Psoas muscle (tissue), 8 donors: ENCODE measurements at regions of chr1 and their contacts with region 1.

Region 1: DNA sequence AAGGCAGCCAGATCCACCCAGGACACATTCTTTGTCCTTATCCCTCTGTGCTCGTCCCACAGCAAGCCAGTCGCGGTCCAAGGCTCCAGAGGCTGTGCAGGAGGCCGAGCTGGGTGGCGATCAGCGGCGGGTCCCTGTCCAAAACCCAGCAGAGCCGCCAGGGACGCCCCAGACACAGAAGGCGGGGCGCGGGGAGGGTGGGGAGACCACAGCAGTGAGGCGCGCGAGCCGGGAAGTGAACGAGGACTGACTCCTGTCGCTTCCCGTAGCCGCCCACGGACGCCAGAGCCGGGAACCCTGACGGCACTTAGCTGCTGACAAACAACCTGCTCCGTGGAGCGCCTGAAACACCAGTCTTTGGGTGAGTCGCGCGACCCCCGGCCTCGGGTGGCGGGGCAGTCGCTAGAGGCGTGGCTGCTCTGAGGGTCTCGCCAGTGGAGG is at the start of gene LGALS8:
- DNase-seq: peak; percentile 92 to 93
- ATAC-seq: peak; percentile 90 to 93 (median 92)
- H3K4me3 ChIP-seq: peak within 1 kb of the TSS; percentile 85
- H3K27ac ChIP-seq: peak within 1 kb of the TSS; percentile 82
- H3K4me1 ChIP-seq: peaks cover 6% of the 10 kb centered on the region
- H3K27me3 ChIP-seq: no peaks in the 10 kb centered on the region
- CTCF ChIP-seq: no peak
- total RNA-seq, gene LGALS8: 11.1 to 17.8 (median 13.4) TPM

Region 2: DNA sequence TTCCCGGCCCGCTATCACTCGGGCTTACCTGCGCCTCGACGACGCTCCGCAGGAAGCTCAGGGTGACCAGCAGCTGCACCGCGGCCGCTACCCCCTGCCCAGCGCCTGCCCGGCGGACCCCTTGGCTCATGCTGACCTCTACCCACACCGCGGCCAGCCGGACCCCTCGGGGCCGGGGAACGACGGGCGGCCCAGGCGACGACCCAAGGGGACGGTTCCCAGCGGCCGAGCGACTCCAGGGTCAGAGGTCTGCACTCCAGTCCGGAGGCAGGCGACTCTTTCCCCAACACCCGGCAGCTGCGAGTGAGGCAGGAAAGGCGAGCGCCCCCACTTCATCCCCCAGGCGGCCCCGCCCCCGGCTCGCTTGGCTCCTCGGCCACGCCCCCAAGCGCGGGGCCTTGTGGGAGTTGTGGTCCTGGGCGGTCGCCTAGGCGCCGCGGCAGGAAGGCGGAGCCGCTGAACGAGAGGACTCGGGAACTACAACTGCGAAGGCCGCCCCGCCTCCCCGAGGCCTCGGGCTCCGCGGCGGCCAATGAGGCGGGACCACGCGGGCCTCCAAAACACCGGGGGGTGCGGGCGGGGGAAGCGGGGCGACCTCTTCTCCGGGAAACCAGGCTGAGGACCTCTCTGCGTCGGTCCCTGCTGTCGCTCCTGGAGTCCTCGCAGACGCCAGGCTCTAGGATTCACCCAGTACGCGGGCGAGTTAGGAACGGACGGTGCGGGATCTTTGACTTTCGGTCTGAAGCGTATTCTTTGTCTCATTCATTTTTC is 241.9 kb before region 1 on chr1 and contains the start of gene ERO1B:
- intact Hi-C with region 1: loop called in 1 of 2 experiments (anchors 5 kb)
- DNase-seq: peak; percentile 98
- ATAC-seq: peak; percentile 99 to 100 (median 100)
- H3K4me3 ChIP-seq: peak within 1 kb of the TSS; percentile 84
- H3K27ac ChIP-seq: peak within 1 kb of the TSS; percentile 84
- H3K4me1 ChIP-seq: peaks cover 7% of the 10 kb centered on the region
- H3K27me3 ChIP-seq: peaks cover 0 to 12% (median 0%) of the 10 kb centered on the region in 3 donors
- CTCF ChIP-seq: no peak
- total RNA-seq, gene ERO1B: 2.6 to 6.0 (median 2.6) TPM